Transverse colon (tissue), 4 donors: ENCODE measurements at regions of chr14 and their contacts with region 1.

Region 1: DNA sequence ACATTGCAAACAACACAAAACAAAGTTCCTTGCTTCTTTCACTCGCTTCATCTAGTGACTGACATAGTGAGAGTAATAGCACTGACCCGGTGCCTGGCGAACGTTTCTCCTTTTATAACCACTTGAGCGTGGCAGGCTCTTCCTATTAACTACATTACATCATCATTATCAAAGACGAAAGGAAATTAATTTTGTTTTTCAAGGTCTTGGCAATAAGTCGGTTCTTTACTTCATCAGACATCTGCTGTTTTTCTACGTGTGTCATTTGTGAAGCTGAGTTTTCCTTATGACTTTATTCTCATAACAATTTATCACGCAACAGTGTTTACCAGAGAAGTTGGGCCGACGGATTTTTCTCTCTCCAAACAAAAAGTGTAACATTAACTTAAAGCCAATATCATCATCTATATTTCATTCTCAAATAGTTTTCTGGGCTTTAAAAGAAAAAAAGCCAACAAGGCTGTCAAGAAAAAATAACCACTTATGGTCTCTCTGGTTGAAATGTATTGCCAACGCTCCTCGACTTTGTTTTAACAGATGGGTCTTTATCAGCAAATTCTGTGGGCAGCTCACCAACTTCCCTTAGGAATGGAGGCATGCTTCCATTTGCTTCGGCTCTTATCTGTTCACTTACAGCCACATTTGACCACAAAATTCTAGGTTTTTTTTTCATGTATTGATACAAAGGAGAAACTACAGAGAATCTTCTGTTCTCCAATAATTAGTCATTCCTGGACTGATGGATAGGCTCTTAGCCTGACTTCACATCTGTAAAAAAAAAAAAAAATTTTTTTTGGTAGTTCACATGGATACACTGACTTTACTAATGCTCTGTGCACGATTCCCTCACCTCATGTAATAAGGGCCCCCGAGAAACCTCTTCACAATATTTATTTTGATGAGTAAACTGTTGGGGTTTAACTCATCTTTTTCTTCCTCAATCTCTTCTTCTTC is 97.1 kb upstream of the CDKN3 start:
- DNase-seq: no peak
- H3K4me3 ChIP-seq: no peak overlapping the region
- H3K27ac ChIP-seq: no peak overlapping the region
- H3K4me1 ChIP-seq: peaks cover 0 to 18% (median 3%) of the 10 kb centered on the region in 4 donors
- H3K27me3 ChIP-seq: no peaks in the 10 kb centered on the region
- CTCF ChIP-seq: no peak
- EP300 ChIP-seq: no peak
- POLR2A ChIP-seq: no peak

Region 2: DNA sequence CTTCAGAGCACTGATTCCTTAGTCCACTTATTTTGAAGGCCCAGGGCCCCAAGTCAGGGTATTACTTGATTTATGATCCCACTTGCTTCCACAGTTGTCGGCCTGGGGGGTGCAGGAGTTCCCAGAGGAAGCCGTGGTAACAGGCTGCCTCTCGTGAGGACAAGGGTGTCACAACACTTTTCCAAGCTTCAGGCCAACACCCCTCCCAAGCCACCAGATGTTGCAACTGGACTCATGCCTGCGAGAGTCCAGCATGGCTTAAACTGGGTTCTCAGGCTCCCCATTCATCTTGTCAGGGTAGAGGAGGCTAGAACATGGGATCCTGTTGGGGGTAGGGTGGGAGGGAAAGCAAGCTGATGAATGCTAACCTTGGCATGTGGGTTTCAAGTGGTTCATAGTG is 399.2 kb before region 1 on chr14:
- in situ Hi-C with region 1: no loop called
- intact Hi-C with region 1: loop called (anchors 10 kb)
- DNase-seq: peak; percentile 35
- H3K4me3 ChIP-seq: no peak overlapping the region
- H3K27ac ChIP-seq: no peak overlapping the region
- H3K4me1 ChIP-seq: no peaks in the 10 kb centered on the region
- H3K27me3 ChIP-seq: no peaks in the 10 kb centered on the region
- CTCF ChIP-seq: no peak
- EP300 ChIP-seq: no peak
- POLR2A ChIP-seq: no peak

Region 3: GRCh38 chr14:54322676-54323337 is 23.1 kb after region 1 on chr14:
- in situ Hi-C with region 1: no loop called
- intact Hi-C with region 1: loop called (anchors 1 kb)
- DNase-seq: no peak
- H3K4me3 ChIP-seq: no peak overlapping the region
- H3K27ac ChIP-seq: no peak overlapping the region
- H3K4me1 ChIP-seq: no peaks in the 10 kb centered on the region
- H3K27me3 ChIP-seq: no peaks in the 10 kb centered on the region
- CTCF ChIP-seq: no peak
- EP300 ChIP-seq: no peak
- POLR2A ChIP-seq: no peak